Testis (tissue), 5 donors: ENCODE measurements at regions of chr2 and their contacts with region 1.

Region 1: GRCh38 chr2:61470965-61471904 is at the start of gene USP34:
- DNase-seq: peak; percentile 95
- H3K4me3 ChIP-seq: peak within 1 kb of the TSS; percentile 74 to 100
- H3K27ac ChIP-seq: peak within 1 kb of the TSS; percentile 92 to 99
- H3K4me1 ChIP-seq: peaks cover 27% of the 10 kb centered on the region
- H3K27me3 ChIP-seq: no peaks in the 10 kb centered on the region
- CTCF ChIP-seq: no peak
- POLR2A ChIP-seq: peak; percentile 67
- total RNA-seq, gene USP34: 230 to 235 TPM

Region 2: GRCh38 chr2:61536572-61537276 is 65.5 kb after region 1 on chr2:
- intact Hi-C with region 1: loop called (anchors 2 kb)
- DNase-seq: peak; percentile 96
- H3K4me3 ChIP-seq: peak overlapping the region; percentile 79 to 87
- H3K27ac ChIP-seq: peak overlapping the region; percentile 94 to 97
- H3K4me1 ChIP-seq: peaks cover 14% of the 10 kb centered on the region
- H3K27me3 ChIP-seq: no peaks in the 10 kb centered on the region
- CTCF ChIP-seq: no peak
- POLR2A ChIP-seq: no peak